ENCODE measurements at regions of chr3 and their contacts with region 1.

Region 1: DNA sequence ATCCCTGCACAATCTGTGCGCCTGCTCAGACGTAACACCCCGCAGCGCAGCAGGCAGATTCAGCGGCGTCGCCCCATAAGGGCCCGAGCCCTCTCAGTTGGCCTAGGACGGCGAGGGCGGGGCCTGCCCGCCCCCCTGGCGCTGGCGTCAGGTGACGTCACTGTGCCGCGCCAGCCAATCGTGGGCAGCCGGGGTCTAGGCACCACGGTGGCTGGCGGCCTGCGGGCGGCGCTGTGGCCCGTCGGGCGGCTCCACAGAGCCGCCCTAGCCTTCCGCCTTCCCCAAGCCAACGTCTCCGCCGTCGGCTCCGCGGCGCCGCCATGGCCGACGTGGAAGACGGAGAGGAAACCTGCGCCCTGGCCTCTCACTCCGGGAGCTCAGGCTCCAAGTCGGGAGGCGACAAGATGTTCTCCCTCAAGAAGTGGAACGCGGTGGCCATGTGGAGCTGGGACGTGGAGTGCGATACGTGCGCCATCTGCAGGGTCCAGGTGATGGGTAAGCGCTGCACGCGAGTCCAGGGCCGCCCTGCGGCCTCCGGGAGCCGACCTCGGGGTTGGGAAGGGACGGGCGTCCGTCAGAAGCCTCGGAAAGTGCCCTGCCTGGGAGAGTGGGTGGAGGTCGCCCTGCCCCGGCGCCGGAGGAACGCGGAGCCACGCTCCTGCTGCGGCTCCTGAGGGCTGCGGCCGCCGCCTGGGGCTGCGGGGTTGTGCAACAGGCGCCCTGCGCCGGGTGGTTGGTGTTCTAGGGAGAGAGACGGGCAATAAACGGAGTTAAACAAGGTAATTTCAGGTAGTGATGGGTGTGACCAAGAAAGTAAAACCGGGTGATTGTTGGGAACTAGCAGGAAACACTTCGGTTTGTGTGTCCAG is at the start of gene RNF7:
- DNase-seq: peak; percentile 95 to 99 (median 96)
- ATAC-seq: peak; percentile 97 to 99 (median 98)
- H3K4me3 ChIP-seq: peak within 1 kb of the TSS; percentile 63 to 99 (median 94)
- H3K27ac ChIP-seq: peak within 1 kb of the TSS; percentile 80 to 97 (median 95)
- H3K4me1 ChIP-seq: peaks cover 0 to 44% (median 31%) of the 10 kb centered on the region in 12 donors
- H3K27me3 ChIP-seq: no peaks in the 10 kb centered on the region
- CTCF ChIP-seq: peak; percentile 87 to 99 (median 96)
- POLR2A ChIP-seq: peak in 1 of 2 donors; percentile 83
- total RNA-seq, gene RNF7: 73.0 to 95.3 (median 79.4) TPM

Region 2: GRCh38 chr3:141605883-141606282 is 132.4 kb before region 1 on chr3:
- intact Hi-C with region 1: loop called in 1 of 10 experiments (anchors 10 kb)
- DNase-seq: no peak
- ATAC-seq: no peak
- H3K4me3 ChIP-seq: no peak overlapping the region
- H3K27ac ChIP-seq: no peak overlapping the region
- H3K4me1 ChIP-seq: peaks cover 0 to 18% (median 8%) of the 10 kb centered on the region in 12 donors
- H3K27me3 ChIP-seq: no peaks in the 10 kb centered on the region
- CTCF ChIP-seq: no peak
- POLR2A ChIP-seq: no peak

Region 3: GRCh38 chr3:141659821-141660613 is 78.2 kb before region 1 on chr3:
- intact Hi-C with region 1: loop called in 1 of 10 experiments (anchors 5 kb)
- DNase-seq: peak; percentile 57 to 85 (median 64)
- ATAC-seq: peak; percentile 72 to 95 (median 92)
- H3K4me3 ChIP-seq: peak overlapping the region; percentile 4 to 73 (median 58)
- H3K27ac ChIP-seq: peak overlapping the region in 5 of 12 donors; percentile 0 to 85 (median 33)
- H3K4me1 ChIP-seq: peaks cover 0 to 21% (median 9%) of the 10 kb centered on the region in 12 donors
- H3K27me3 ChIP-seq: peaks cover 0 to 18% (median 0%) of the 10 kb centered on the region in 9 donors
- CTCF ChIP-seq: no peak
- POLR2A ChIP-seq: no peak

Region 4: DNA sequence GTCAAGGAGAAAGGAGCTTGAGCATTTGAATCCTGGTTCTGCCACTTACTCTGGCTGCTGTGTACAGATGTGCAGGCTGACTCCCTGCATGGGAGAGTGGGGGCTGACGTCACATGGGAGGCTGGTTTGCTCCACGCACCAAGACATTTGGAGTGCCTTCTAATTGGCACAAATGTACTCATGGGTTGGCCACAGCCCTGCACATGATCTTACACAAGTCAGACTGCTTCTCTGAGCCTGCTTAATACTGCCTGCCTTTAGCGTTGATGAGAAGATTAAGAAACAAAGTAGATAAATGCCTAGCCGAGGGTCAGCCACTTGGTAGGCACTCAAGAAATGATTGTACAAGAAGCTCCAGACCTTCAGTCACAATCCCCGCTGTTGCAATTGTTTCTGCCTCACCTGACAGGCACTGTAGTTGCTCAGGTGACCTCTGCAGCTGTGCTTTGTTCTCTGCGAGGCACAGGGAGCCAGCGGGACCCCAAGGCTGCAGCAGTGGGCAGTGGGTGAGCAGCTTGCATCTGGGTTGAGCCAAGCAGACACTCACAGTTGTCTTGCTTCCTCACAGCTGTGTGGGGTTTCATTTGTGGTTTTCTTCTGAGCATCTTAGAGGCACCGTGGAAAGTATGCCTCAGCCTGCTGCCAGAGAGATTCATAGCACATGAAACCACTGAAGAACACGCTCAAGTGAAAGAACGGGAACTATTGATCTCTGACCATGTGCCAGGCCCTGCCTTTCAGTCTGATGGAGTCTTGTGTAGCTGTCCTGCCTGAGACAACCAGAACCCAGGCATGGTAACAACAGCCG is 58.0 kb after region 1 on chr3:
- intact Hi-C with region 1: loop called in 1 of 10 experiments (anchors 5 kb)
- DNase-seq: peak in 3 of 5 donors; percentile 17 to 66 (median 55)
- ATAC-seq: peak in 3 of 4 donors; percentile 12 to 59 (median 33)
- H3K4me3 ChIP-seq: peak overlapping the region in 3 of 12 donors; percentile 48 to 62 (median 50)
- H3K27ac ChIP-seq: peak overlapping the region in 11 of 12 donors; percentile 62 to 96 (median 82)
- H3K4me1 ChIP-seq: peaks cover 0 to 37% (median 22%) of the 10 kb centered on the region in 12 donors
- H3K27me3 ChIP-seq: no peaks in the 10 kb centered on the region
- CTCF ChIP-seq: no peak
- POLR2A ChIP-seq: no peak

Region 5: DNA sequence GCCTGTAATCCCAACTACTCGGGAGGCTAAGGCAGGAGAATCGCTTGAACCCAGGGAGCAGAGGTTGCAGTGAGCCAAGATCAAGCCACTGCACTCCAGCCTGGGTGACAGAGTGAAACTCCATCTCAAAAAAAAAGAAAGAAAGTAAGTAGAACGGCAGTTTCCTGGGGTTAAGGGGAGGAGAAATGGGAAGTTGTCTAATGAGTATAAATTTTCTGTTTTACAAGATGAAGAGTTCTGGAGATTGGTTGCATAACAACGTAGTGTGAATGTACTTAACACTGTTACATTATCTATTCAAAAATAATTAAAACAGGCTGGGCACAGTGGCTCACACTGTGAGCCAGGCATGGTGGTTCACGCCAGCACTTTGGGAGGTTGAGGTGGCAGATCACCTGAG is 70.3 kb after region 1 on chr3:
- intact Hi-C with region 1: no loop called
- DNase-seq: no peak
- ATAC-seq: no peak
- H3K4me3 ChIP-seq: no peak overlapping the region
- H3K27ac ChIP-seq: no peak overlapping the region
- H3K4me1 ChIP-seq: no peaks in the 10 kb centered on the region
- H3K27me3 ChIP-seq: no peaks in the 10 kb centered on the region
- CTCF ChIP-seq: no peak
- POLR2A ChIP-seq: no peak

Region 6: DNA sequence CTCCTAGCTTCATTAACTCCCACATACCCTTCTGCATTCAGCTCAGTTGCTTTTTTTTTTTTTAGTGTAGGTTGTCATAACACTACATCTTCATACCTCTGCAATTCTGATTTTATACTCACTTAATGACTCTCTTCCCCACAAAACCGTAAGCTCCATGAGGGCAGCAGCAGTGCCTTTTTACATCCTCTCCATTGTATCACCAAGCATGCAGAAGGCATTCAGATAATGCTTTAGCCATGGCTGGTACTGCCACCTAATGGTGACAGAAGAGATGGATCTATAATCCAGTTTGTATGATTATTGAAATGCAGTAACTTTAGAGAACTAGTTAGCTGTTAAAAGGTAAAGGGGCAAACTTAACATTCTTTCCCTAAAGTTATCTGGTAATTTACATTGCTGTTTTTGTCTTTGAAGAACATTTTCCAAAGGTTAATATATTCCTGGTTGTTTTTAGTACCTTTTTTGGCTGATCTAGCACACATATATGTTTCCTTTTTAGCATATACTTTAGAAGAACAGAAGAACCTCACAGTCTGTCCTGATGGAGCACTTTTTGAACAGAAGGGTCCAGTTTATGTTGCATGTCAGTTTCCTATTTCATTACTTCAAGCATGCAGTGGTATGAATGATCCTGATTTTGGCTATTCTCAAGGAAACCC is 175.0 kb after region 1 on chr3:
- intact Hi-C with region 1: loop called in 8 of 10 experiments (anchors 2 to 10 kb)
- DNase-seq: peak in 2 of 5 donors; percentile 25 to 32
- ATAC-seq: peak in 3 of 4 donors; percentile 64 to 77 (median 67)
- H3K4me3 ChIP-seq: no peak overlapping the region
- H3K27ac ChIP-seq: no peak overlapping the region
- H3K4me1 ChIP-seq: no peaks in the 10 kb centered on the region
- H3K27me3 ChIP-seq: no peaks in the 10 kb centered on the region
- CTCF ChIP-seq: peak; percentile 56 to 75 (median 67)
- POLR2A ChIP-seq: no peak

Region 7: GRCh38 chr3:142028243-142028777 is 290.1 kb after region 1 on chr3:
- intact Hi-C with region 1: no loop called
- DNase-seq: peak in 1 of 5 donors; percentile 38
- ATAC-seq: peak; percentile 84 to 90 (median 84)
- H3K4me3 ChIP-seq: peak overlapping the region; percentile 20 to 64 (median 49)
- H3K27ac ChIP-seq: peak overlapping the region in 10 of 12 donors; percentile 1 to 69 (median 48)
- H3K4me1 ChIP-seq: peaks cover 0 to 40% (median 7%) of the 10 kb centered on the region in 12 donors
- H3K27me3 ChIP-seq: no peaks in the 10 kb centered on the region
- CTCF ChIP-seq: peak in 1 of 12 donors; percentile 25
- POLR2A ChIP-seq: no peak

Measured in heart left ventricle (tissue), 16 donors.